ENCODE measurements at regions of chr10 and their contacts with region 1.

Region 1: DNA sequence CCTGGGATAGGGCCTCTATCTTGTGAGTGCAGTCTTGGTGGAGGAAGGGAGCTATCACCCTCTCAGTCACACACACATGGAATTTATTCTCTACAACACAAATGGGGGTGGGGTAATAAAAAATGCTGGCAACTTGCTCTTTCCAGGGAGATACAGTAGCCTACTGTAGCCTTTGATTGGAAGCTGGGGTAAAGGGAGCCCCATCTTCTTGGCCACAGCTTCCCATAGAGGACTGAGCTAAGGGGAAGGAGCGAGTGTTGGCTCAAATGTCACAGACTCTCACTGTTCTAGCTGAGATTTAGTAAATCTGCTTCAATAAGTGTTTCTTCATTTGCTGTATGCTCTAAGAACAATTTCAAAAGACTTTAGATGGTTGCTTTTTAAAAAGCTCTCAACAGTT is 222.2 kb upstream of the CXCL12 start:
- DNase-seq: no peak
- H3K4me3 ChIP-seq: no peak overlapping the region
- H3K27ac ChIP-seq: no peak overlapping the region
- H3K4me1 ChIP-seq: no peaks in the 10 kb centered on the region
- H3K27me3 ChIP-seq: no peaks in the 10 kb centered on the region
- CTCF ChIP-seq: no peak
- POLR2A ChIP-seq: no peak

Region 2: GRCh38 chr10:44083719-44084400 is 523.3 kb before region 1 on chr10:
- intact Hi-C with region 1: no loop called
- DNase-seq: no peak
- H3K4me3 ChIP-seq: no peak overlapping the region
- H3K27ac ChIP-seq: no peak overlapping the region
- H3K4me1 ChIP-seq: no peaks in the 10 kb centered on the region
- H3K27me3 ChIP-seq: no peaks in the 10 kb centered on the region
- CTCF ChIP-seq: no peak
- POLR2A ChIP-seq: no peak

Region 3: DNA sequence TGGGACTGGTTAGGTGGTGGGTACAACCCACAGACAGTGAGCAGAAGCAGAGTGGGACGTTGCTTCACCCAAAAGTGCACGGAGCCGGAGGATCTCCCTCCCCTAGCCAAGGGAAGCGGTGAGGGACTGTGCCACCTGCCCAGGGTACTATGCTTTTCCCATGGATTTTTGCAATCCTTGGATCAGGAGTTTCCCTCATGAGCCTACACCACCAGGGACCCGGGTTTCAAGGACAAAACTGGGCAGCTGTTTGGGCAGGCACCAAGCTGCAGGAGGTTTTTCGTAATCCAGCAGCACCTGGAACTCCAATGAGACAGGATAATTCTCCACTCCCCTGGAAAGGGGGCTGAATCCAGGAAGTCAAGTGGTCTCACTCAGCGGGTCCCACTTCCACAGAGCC is 13.2 kb before region 1 on chr10:
- intact Hi-C with region 1: loop called (anchors 1 kb)
- DNase-seq: no peak
- H3K4me3 ChIP-seq: no peak overlapping the region
- H3K27ac ChIP-seq: no peak overlapping the region
- H3K4me1 ChIP-seq: no peaks in the 10 kb centered on the region
- H3K27me3 ChIP-seq: no peaks in the 10 kb centered on the region
- CTCF ChIP-seq: no peak
- POLR2A ChIP-seq: no peak